ENCODE measurements at regions of chr3 and their contacts with region 1.

Region 1: DNA sequence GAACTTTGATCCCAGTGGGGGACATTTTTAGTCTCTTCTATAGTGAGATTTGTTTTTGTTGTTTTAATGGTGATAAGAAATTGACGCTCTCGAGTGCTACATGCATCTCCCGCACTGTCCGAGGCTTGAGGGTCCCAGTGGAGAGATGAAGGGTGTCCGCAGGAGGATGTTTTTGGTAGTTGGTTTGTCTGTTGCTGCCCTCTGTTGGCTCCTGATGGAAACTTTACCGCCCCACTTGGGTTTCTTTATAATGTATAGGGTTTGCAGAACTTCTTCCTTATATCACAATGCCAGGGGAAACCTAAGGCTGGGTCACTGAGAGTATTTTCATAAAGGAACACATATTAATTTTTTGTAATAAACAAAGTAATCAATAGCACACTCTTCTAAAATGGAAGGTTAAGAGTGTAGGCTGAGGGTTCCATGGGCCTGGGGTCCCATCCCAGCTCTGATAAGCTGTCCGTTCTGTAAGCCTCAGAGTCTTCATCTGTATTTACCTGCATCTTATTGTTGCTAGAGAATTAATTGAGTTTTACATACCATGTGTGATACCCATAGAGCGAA is 185.3 kb upstream of the FEZF2 start:
- DNase-seq: no peak
- ATAC-seq: no peak

Region 2: GRCh38 chr3:62027796-62028195 is 530.8 kb before region 1 on chr3:
- intact Hi-C with region 1: no loop called
- DNase-seq: no peak
- ATAC-seq: no peak

Region 3: DNA sequence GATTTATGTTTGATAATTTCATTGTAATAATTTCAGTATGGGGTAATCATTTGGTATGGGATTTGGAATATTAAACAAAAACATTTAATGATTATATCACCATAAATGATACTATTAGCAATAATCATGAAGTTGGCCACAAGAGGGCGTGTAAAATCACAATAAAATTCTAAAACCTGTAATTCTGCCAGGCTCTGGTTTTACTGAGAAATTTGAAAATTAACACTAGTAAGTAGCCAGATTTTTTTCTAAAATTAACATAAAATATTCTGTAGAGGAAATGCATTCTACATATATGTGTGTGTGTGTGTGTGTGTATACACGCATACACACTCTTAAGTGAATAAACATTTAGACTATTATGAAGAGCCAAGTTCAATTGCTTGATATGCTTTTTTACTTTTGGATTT is 225.8 kb before region 1 on chr3:
- intact Hi-C with region 1: loop called in 1 of 2 experiments (anchors 2 kb)
- DNase-seq: no peak
- ATAC-seq: no peak